PC-9 (cell line): ENCODE measurements at regions of chr12 and their contacts with region 1.

Region 1: GRCh38 chr12:12505544-12506495 is 56.8 kb downstream of the DUSP16 start:
- DNase-seq: no peak
- H3K4me3 ChIP-seq: no peak overlapping the region
- H3K27ac ChIP-seq: no peak overlapping the region
- H3K4me1 ChIP-seq: no peaks in the 10 kb centered on the region
- H3K27me3 ChIP-seq: no peaks in the 10 kb centered on the region
- CTCF ChIP-seq: no peak

Region 2: DNA sequence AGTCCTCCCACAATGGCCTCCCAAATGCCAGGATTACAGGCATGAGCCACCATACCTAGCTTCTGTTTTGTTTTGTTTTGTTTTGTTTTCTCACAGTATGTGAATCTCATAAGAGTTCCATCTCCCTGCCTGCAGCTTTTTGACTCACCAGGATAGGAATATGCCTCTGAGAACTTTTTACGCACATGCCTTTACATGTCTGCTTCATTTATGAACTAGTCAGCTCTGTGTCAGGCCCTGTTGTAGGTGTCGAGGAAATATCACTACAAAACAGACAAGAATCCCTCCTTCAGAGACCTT is 60.0 kb before region 1 on chr12:
- CTCF ChIA-PET with region 1: no interaction called
- POLR2A ChIA-PET with region 1: interaction called, 17 read pairs
- intact Hi-C with region 1: no loop called
- DNase-seq: no peak
- H3K4me3 ChIP-seq: no peak overlapping the region
- H3K27ac ChIP-seq: no peak overlapping the region
- H3K4me1 ChIP-seq: peaks cover 17% of the 10 kb centered on the region
- H3K27me3 ChIP-seq: no peaks in the 10 kb centered on the region
- CTCF ChIP-seq: no peak

Region 3: GRCh38 chr12:12486661-12487240 is 19.1 kb before region 1 on chr12:
- CTCF ChIA-PET with region 1: interaction called, 13 read pairs
- POLR2A ChIA-PET with region 1: no interaction called
- intact Hi-C with region 1: no loop called
- DNase-seq: no peak
- H3K4me3 ChIP-seq: no peak overlapping the region
- H3K27ac ChIP-seq: no peak overlapping the region
- H3K4me1 ChIP-seq: no peaks in the 10 kb centered on the region
- H3K27me3 ChIP-seq: no peaks in the 10 kb centered on the region
- CTCF ChIP-seq: no peak

Region 4: DNA sequence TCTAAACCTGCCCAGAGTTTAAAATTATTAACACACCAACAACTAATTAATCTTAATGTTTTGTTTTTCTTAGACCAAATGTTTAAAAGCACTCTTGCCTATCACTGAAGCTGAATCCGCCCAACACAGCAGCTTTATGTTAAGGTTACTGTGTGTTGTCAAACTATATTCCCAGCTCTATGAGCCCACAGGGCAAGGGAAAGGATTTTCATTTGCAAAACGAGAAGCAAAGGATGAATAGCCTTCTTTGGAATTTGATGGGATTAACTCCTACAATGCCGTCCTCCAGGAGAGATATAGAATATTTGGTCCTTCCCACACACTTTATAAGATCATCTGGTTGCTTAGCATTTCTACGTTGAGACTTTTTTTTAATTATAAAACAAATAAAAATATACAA is 13.1 kb after region 1 on chr12:
- CTCF ChIA-PET with region 1: no interaction called
- POLR2A ChIA-PET with region 1: interaction called, 24 read pairs
- intact Hi-C with region 1: no loop called
- DNase-seq: no peak
- H3K4me3 ChIP-seq: no peak overlapping the region
- H3K27ac ChIP-seq: no peak overlapping the region
- H3K4me1 ChIP-seq: no peaks in the 10 kb centered on the region; the same call in 1 of the 2 replicates
- H3K27me3 ChIP-seq: no peaks in the 10 kb centered on the region
- CTCF ChIP-seq: no peak